IMR-90 (cell line): ENCODE measurements at regions of chr19 and their contacts with region 1.

Region 1: GRCh38 chr19:42396381-42397262 is 6.5 kb upstream of the CNFN start:
- DNase-seq: peak; percentile 99
- ATAC-seq: peak; percentile 97
- H3K4me3 ChIP-seq: peak overlapping the region; percentile 63
- H3K27ac ChIP-seq: peak overlapping the region; percentile 42
- H3K4me1 ChIP-seq: peaks cover 7% of the 10 kb centered on the region; the same call in 1 of the 2 replicates
- H3K27me3 ChIP-seq: peaks cover 11% of the 10 kb centered on the region; the same call in 1 of the 2 replicates
- CTCF ChIP-seq: no peak
- POLR2A ChIP-seq: peak; percentile 86
- RAD21 ChIP-seq: no peak

Region 2: GRCh38 chr19:42113641-42114348 is 282.8 kb before region 1 on chr19:
- CTCF ChIA-PET with region 1: interaction called, 4 read pairs
- POLR2A ChIA-PET with region 1: no interaction called
- dilution Hi-C with region 1: no loop called
- in situ Hi-C with region 1: loop called (anchors 10 kb)
- intact Hi-C with region 1: no loop called
- DNase-seq: peak; percentile 99
- ATAC-seq: peak; percentile 88
- H3K4me3 ChIP-seq: no peak overlapping the region
- H3K27ac ChIP-seq: peak overlapping the region; percentile 63
- H3K4me1 ChIP-seq: peaks cover 24% of the 10 kb centered on the region
- H3K27me3 ChIP-seq: no peaks in the 10 kb centered on the region
- CTCF ChIP-seq: peak; percentile 47
- POLR2A ChIP-seq: no peak
- RAD21 ChIP-seq: 0 out of 2 replicates have a peak, but pooled peaks have one; percentile 22

Region 3: GRCh38 chr19:42352301-42353259 is 44.0 kb before region 1 on chr19:
- CTCF ChIA-PET with region 1: no interaction called
- POLR2A ChIA-PET with region 1: no interaction called
- dilution Hi-C with region 1: no loop called
- in situ Hi-C with region 1: no loop called
- intact Hi-C with region 1: no loop called
- DNase-seq: peak; percentile 8
- ATAC-seq: no peak
- H3K4me3 ChIP-seq: no peak overlapping the region
- H3K27ac ChIP-seq: no peak overlapping the region
- H3K4me1 ChIP-seq: no peaks in the 10 kb centered on the region
- H3K27me3 ChIP-seq: no peaks in the 10 kb centered on the region
- CTCF ChIP-seq: no peak
- POLR2A ChIP-seq: no peak
- RAD21 ChIP-seq: no peak

Region 4: DNA sequence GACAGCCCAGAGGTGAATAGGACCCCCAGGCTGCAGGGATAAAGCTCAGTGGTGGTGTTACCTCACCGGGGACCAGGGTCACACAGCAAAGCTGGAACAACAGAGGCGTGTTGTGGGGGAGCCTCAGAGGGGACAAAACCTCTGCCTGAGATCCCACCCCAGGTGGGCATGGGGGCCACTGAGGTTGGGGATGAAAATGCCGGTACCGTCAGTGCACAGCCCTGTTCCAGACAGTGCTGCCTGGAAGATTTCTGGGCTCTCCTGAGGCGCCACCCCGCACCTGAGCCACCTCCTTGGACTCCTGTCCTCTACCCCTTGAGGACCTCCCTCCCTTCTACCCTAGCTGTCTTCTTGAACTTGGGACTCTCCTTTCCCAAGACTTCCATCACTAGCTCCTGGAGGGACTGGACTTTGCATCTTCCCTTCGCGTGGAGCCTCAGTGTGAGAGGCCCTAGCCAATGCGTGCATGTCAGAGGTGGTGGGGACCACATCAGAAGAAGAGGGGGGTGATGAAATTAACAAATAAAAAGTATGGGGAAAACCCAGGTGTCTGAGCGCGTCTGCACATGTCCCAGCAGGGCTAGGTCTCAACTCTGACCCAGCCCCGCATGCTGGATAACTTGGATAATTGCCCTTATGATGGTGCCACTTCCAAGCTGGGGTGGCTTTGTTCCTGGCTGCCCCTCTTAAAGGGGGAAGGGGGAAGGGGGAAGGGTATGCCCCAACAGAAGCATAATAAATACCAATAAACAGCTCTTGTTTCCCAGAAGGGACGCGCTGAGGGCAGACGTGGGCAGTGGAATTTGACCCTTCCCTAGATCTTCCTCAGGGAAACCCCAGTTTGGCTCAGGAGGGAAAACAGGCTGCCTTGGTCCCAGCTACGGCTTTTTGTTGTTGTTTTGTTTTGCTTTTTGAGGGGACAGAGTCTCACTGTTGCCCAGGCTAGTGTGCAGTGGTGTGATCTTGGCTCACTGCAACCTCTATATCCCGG is 18.1 kb before region 1 on chr19:
- CTCF ChIA-PET with region 1: no interaction called
- POLR2A ChIA-PET with region 1: no interaction called
- dilution Hi-C with region 1: no loop called
- in situ Hi-C with region 1: no loop called
- intact Hi-C with region 1: no loop called
- DNase-seq: no peak
- ATAC-seq: no peak
- H3K4me3 ChIP-seq: no peak overlapping the region
- H3K27ac ChIP-seq: no peak overlapping the region
- H3K4me1 ChIP-seq: no peaks in the 10 kb centered on the region
- H3K27me3 ChIP-seq: peaks cover 16% of the 10 kb centered on the region
- CTCF ChIP-seq: no peak
- POLR2A ChIP-seq: no peak
- RAD21 ChIP-seq: no peak